Endothelial cell of umbilical vein (primary cell): ENCODE measurements at regions of chr12 and their contacts with region 1.

Region 1: DNA sequence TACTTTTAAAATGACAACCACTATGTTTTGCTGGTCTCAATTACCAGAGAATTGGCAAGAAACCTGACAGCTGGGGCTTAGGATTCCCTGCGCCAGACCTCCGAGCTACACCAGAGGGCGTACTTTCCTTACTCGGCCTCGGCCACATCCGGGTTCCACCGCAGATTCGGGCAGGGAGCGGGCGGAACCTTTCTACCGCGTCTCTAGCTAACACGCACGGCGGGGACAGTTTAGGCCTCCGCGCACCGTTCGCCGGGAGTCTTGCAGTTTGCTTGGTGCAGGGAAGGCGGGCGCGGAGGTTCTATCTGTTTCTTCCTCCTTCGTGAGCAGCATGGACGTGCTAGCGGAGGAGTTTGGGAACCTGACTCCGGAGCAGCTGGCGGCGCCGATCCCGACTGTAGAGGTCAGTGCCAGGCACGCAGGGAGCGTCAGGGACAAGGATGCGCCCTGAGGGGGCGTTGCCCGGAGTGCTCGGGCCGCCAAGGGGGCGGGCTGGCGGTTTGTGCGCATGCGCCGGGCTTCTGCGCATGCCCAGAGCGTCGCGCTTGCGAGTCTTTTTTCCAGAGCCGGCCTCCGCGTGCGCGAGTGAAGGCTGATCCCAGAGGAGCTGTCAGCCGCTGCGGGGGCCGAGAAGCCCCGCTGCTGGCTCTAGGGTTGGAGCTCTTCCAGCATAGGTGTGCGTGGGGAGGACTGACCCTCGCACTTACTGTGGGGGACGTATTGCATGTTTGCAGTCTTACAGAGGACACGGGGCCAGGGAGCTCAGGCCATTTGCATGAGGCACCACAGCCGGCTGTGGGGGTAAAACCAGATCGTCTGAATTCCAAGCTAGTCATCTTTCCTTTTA is at the start of gene POLR3B:
- DNase-seq: peak; percentile 97
- H3K4me3 ChIP-seq: peak within 1 kb of the TSS; percentile 52 to 92 (median 87)
- H3K27ac ChIP-seq: peak within 1 kb of the TSS; percentile 64
- H3K4me1 ChIP-seq: peaks cover 12% of the 10 kb centered on the region
- H3K27me3 ChIP-seq: peaks cover 0 to 4% of the 10 kb centered on the region in 2 experiments
- CTCF ChIP-seq: peak; percentile 86 to 89
- POLR2A ChIP-seq: peak; percentile 90
- total RNA-seq, gene POLR3B: 10.1 and 12.3 TPM in 2 replicates

Region 2: DNA sequence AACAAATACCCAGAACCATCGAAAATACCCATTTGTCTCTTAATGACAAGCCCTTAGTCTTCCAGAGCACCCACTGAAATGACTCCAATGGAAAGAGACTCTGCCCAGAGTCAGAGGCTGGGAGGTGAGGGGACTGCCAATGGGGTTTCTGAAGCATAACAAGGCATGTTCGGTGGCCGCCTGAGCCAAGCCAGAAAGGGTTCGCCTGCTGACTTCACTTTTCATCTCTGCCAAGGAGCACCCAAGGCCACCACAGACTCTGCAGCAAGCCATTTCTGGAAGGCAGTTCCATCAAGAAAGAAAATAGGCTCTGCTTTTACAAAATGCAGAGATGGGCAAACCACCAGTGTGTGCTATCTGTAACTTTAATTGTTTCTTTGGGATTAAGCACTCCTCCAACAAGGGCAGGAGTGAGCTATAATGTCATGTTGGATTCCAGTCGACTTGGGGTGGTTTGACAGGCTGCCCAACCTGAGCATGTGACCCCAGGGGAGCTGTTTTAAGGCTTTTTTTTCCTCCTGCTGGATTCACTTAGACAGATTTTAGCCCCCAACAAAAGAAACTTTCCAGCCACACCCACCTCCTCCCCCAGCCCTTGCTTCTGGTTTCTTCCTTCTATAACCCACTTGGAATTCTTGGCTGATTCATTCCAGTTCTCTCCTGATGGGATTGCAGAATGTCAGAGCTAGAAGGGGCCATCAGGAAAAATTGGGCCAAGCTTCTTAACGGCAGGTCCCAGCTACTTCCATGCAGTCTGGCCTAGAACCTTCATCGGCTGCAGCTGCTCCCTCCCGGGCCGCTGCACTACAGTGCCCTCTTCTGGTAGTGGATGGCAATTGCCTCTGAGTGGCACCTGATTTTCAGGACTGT is 134.1 kb before region 1 on chr12:
- CTCF ChIA-PET with region 1: interaction called, 29 read pairs
- POLR2A ChIA-PET with region 1: interaction called, 3 read pairs
- dilution Hi-C with region 1: no loop called
- intact Hi-C with region 1: no loop called
- DNase-seq: peak; percentile 75
- H3K4me3 ChIP-seq: no peak overlapping the region
- H3K27ac ChIP-seq: no peak overlapping the region
- H3K4me1 ChIP-seq: no peaks in the 10 kb centered on the region
- H3K27me3 ChIP-seq: peaks cover 9 to 13% of the 10 kb centered on the region in 2 experiments
- CTCF ChIP-seq: peak; percentile 89 to 93
- POLR2A ChIP-seq: no peak

Region 3: GRCh38 chr12:106369607-106370346 is 12.0 kb after region 1 on chr12:
- CTCF ChIA-PET with region 1: interaction called, 13 read pairs
- POLR2A ChIA-PET with region 1: no interaction called
- dilution Hi-C with region 1: no loop called
- intact Hi-C with region 1: loop called (anchors 1 kb)
- DNase-seq: peak; percentile 76
- H3K4me3 ChIP-seq: no peak overlapping the region
- H3K27ac ChIP-seq: peak overlapping the region; percentile 72
- H3K4me1 ChIP-seq: peaks cover 14% of the 10 kb centered on the region
- H3K27me3 ChIP-seq: no peaks in the 10 kb centered on the region
- CTCF ChIP-seq: no peak
- POLR2A ChIP-seq: no peak

Region 4: DNA sequence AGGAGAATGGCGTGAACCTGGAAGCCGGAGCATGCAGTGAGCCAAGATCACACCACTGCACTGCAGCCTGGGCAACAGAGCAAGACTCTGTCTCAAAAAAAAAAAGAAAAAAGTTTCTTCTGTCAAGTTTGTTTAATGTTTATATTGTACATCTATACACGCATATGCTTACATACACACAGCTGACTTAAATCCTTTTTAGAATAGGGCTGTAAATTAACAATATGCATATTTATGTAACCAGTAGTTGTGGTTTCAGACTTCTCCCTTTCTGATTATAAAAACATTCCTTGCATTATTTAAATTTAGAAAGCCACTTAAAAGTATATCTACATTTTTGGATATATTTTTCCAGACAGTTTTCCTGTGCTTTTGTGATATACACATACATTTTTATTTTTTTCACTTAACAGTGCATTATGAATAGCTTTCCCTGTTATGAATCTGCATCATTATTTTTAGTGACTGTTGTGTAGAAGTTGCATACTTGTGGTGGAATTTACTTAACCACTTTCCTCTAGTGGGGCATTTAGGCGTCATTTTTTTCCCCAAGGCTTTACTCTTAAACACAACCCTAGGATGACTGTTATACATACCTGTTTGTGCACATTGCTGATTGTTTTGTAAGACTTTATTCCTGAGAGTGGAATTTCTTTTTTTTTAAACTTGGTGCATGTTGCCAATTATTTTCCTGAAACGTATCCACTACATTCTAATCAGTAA is 29.2 kb after region 1 on chr12:
- CTCF ChIA-PET with region 1: interaction called, 4 read pairs
- POLR2A ChIA-PET with region 1: no interaction called
- dilution Hi-C with region 1: no loop called
- intact Hi-C with region 1: loop called (anchors 1 kb)
- DNase-seq: no peak
- H3K4me3 ChIP-seq: no peak overlapping the region
- H3K27ac ChIP-seq: no peak overlapping the region
- H3K4me1 ChIP-seq: no peaks in the 10 kb centered on the region
- H3K27me3 ChIP-seq: no peaks in the 10 kb centered on the region
- CTCF ChIP-seq: no peak
- POLR2A ChIP-seq: no peak

Region 5: GRCh38 chr12:106841510-106842302 is 483.9 kb after region 1 on chr12:
- CTCF ChIA-PET with region 1: interaction called, 26 read pairs
- POLR2A ChIA-PET with region 1: interaction called, 3 read pairs
- dilution Hi-C with region 1: no loop called
- intact Hi-C with region 1: no loop called
- DNase-seq: peak; percentile 75
- H3K4me3 ChIP-seq: peak overlapping the region in 1 of 3 experiments; percentile 27
- H3K27ac ChIP-seq: peak overlapping the region; percentile 15
- H3K4me1 ChIP-seq: peaks cover 20% of the 10 kb centered on the region
- H3K27me3 ChIP-seq: no peaks in the 10 kb centered on the region
- CTCF ChIP-seq: peak; percentile 28 to 43
- POLR2A ChIP-seq: no peak